Adrenal gland (tissue), 19 donors: ENCODE measurements at regions of chr11 and their contacts with region 1.

Region 1: DNA sequence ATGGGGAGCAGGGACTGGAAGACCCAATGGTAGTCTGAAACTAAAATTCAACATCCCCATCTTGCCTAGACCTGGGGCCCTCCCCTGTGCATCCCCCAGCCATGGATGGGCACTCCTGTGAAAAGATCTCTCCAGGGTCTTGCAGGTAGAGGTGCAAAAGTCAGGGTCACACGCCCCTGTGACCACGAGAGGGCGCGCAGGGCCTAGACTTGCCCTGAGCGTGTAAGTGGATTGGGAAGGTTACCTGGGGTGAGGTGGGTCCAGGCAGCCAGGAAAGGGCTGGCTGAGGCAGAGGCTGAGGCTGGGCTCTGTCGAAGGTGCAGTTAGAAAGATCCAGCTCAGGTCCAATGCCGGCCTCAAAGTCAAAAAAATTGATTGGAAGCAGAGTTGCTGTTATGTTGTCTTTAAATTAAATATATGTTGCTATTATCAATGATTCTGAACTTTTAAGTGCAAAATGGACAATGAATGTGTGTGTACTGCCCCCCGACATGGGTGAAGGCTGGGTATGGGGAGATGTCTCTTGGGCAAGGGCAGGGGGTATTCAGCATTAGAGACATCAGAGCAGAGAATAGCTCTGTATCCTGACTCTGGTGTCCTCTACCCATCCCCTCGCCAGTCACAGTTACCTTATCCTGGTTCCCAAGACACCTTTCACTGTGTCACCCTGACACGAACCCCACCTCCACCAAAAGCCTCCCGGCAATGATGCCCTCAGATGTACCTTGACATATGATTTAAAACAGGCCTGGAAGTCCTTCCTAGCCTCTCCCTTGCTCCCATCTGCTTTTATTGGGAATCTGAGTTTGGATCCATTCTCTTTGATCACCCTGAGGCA is 4.7 kb upstream of the POU2F3 start:
- DNase-seq: peak in 5 of 7 donors; percentile 49 to 89 (median 57)
- H3K4me3 ChIP-seq: no peak overlapping the region
- H3K27ac ChIP-seq: no peak overlapping the region
- H3K4me1 ChIP-seq: peaks cover 0 to 4% of the 10 kb centered on the region in 2 donors
- H3K27me3 ChIP-seq: peaks cover 12% of the 10 kb centered on the region
- CTCF ChIP-seq: peak; percentile 40 to 74 (median 63)
- POLR2A ChIP-seq: no peak

Region 2: GRCh38 chr11:120293043-120293800 is 58.0 kb after region 1 on chr11:
- intact Hi-C with region 1: loop called in 1 of 2 experiments (anchors 5 kb)
- DNase-seq: no peak
- H3K4me3 ChIP-seq: no peak overlapping the region
- H3K27ac ChIP-seq: no peak overlapping the region
- H3K4me1 ChIP-seq: peaks cover 0 to 10% of the 10 kb centered on the region in 2 donors
- H3K27me3 ChIP-seq: no peaks in the 10 kb centered on the region
- CTCF ChIP-seq: no peak
- POLR2A ChIP-seq: no peak